ENCODE measurements at regions of chr7 and their contacts with region 1.

Region 1: DNA sequence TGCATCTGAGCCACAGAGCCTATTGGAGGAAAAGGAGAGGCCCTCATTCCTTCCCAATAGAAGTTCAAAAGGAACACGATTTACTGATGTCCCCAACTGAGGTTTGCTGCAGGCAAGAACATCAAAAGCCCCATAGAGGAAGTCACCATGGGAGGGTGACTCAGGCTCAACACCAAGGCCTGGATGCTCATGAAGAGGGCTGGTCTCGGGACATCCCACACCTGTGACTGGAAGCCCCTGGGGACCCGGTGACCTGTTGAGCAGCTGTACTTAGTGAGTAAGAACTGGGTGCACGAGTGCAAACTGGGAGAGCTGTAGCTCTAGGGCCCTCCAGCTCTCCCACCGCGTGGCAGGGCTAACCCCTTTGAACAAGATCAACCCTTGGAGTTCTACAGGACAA is 38.0 kb downstream of the CYTH3 start:
- DNase-seq: no peak
- ATAC-seq: peak; percentile 79
- H3K4me3 ChIP-seq: no peak overlapping the region
- H3K27ac ChIP-seq: peak overlapping the region; percentile 37; the same call in 1 of the 2 replicates
- H3K4me1 ChIP-seq: peaks cover 7% of the 10 kb centered on the region
- H3K27me3 ChIP-seq: no peaks in the 10 kb centered on the region
- CTCF ChIP-seq: no peak
- EP300 ChIP-seq: no peak
- POLR2A ChIP-seq: no peak
- RAD21 ChIP-seq: peak; percentile 23; the same call in 1 of the 2 replicates

Region 2: DNA sequence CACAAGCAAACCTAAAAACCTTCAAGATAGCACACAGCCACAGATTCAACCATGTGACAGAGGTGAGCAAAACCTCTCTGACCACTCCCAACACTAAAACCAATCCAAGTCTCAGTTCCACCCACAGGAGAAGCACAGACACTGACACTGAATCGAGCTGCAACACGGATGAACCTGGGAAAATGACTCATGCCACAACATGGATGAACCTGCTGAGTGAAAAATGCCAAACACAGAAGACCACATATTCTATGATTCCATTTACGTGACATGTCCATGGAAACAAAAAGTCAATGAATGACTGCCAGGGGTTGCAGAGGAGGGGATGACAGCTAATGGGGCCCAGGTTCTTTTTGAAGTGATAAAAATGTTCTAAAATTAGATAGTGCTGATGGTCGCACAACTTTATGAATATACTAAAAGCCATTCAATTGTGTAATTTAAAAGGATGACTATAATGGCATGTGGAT is 16.0 kb after region 1 on chr7:
- CTCF ChIA-PET with region 1: interaction called, 3 read pairs
- POLR2A ChIA-PET with region 1: interaction called, 9 read pairs
- RAD21 ChIA-PET with region 1: interaction called, 10 read pairs
- SMC1A ChIA-PET with region 1: interaction called, 11 read pairs
- in situ Hi-C with region 1: no loop called
- intact Hi-C with region 1: no loop called
- DNase-seq: peak; percentile 93
- ATAC-seq: peak; percentile 95
- H3K4me3 ChIP-seq: peak overlapping the region; percentile 15; the same call in 1 of the 2 replicates
- H3K27ac ChIP-seq: peak overlapping the region; percentile 77
- H3K4me1 ChIP-seq: peaks cover 17% of the 10 kb centered on the region
- H3K27me3 ChIP-seq: no peaks in the 10 kb centered on the region
- CTCF ChIP-seq: no peak
- EP300 ChIP-seq: peak; percentile 69 to 84; a peak in 3 of 4 replicates
- POLR2A ChIP-seq: no peak
- RAD21 ChIP-seq: peak; percentile 42; the same call in 1 of the 2 replicates

Region 3: GRCh38 chr7:6385110-6385971 is 151.0 kb after region 1 on chr7:
- CTCF ChIA-PET with region 1: no interaction called
- POLR2A ChIA-PET with region 1: no interaction called
- RAD21 ChIA-PET with region 1: no interaction called
- SMC1A ChIA-PET with region 1: no interaction called
- in situ Hi-C with region 1: no loop called
- intact Hi-C with region 1: no loop called
- DNase-seq: no peak
- ATAC-seq: no peak
- H3K4me3 ChIP-seq: no peak overlapping the region; the same call in 1 of the 2 replicates
- H3K27ac ChIP-seq: no peak overlapping the region
- H3K4me1 ChIP-seq: peaks cover 21% of the 10 kb centered on the region
- H3K27me3 ChIP-seq: no peaks in the 10 kb centered on the region
- CTCF ChIP-seq: no peak
- EP300 ChIP-seq: no peak
- POLR2A ChIP-seq: no peak
- RAD21 ChIP-seq: no peak

Measured in GM12878 (cell line).